CD8-positive, alpha-beta T cell (primary cell): ENCODE measurements at regions of chr2 and their contacts with region 1.

Region 1: GRCh38 chr2:155377266-155377680 is 678.8 kb downstream of the KCNJ3 start:
- DNase-seq: peak in 1 of 9 experiments; percentile 6
- ATAC-seq: no peak
- H3K4me3 ChIP-seq: no peak overlapping the region
- H3K4me3 Mint-ChIP-seq: no peak overlapping the region
- H3K27ac ChIP-seq: no peak overlapping the region
- H3K27ac Mint-ChIP-seq: no peak overlapping the region
- H3K4me1 ChIP-seq: no peaks in the 10 kb centered on the region
- H3K4me1 Mint-ChIP-seq: no peaks in the 10 kb centered on the region
- H3K27me3 ChIP-seq: no peaks in the 10 kb centered on the region
- H3K27me3 Mint-ChIP-seq: no peaks in the 10 kb centered on the region
- CTCF ChIP-seq: no peak

Region 2: GRCh38 chr2:156892467-156893281 is 1515.4 kb after region 1 on chr2:
- CTCF ChIA-PET with region 1: no interaction called
- POLR2A ChIA-PET with region 1: no interaction called
- intact Hi-C with region 1: loop called in 1 of 2 experiments (anchors 5 kb)
- DNase-seq: peak in 2 of 9 experiments; percentile 12 to 22
- ATAC-seq: no peak
- H3K4me3 ChIP-seq: no peak overlapping the region
- H3K4me3 Mint-ChIP-seq: no peak overlapping the region
- H3K27ac ChIP-seq: no peak overlapping the region
- H3K27ac Mint-ChIP-seq: no peak overlapping the region
- H3K4me1 ChIP-seq: no peaks in the 10 kb centered on the region
- H3K4me1 Mint-ChIP-seq: peaks cover 4% of the 10 kb centered on the region
- H3K27me3 ChIP-seq: peaks cover 0 to 3% of the 10 kb centered on the region in 2 experiments
- H3K27me3 Mint-ChIP-seq: peaks cover 8% of the 10 kb centered on the region
- CTCF ChIP-seq: no peak

Region 3: GRCh38 chr2:157055660-157056199 is 1678.5 kb after region 1 on chr2:
- CTCF ChIA-PET with region 1: no interaction called
- POLR2A ChIA-PET with region 1: no interaction called
- intact Hi-C with region 1: loop called in 1 of 2 experiments (anchors 10 kb)
- DNase-seq: peak in 1 of 9 experiments; percentile 2
- ATAC-seq: no peak
- H3K4me3 ChIP-seq: no peak overlapping the region
- H3K4me3 Mint-ChIP-seq: no peak overlapping the region
- H3K27ac ChIP-seq: no peak overlapping the region
- H3K27ac Mint-ChIP-seq: no peak overlapping the region
- H3K4me1 ChIP-seq: no peaks in the 10 kb centered on the region
- H3K4me1 Mint-ChIP-seq: no peaks in the 10 kb centered on the region
- H3K27me3 ChIP-seq: no peaks in the 10 kb centered on the region
- H3K27me3 Mint-ChIP-seq: peaks cover 5% of the 10 kb centered on the region
- CTCF ChIP-seq: no peak